Psoas muscle (tissue), 8 donors: ENCODE measurements at regions of chr11 and their contacts with region 1.

Region 1: DNA sequence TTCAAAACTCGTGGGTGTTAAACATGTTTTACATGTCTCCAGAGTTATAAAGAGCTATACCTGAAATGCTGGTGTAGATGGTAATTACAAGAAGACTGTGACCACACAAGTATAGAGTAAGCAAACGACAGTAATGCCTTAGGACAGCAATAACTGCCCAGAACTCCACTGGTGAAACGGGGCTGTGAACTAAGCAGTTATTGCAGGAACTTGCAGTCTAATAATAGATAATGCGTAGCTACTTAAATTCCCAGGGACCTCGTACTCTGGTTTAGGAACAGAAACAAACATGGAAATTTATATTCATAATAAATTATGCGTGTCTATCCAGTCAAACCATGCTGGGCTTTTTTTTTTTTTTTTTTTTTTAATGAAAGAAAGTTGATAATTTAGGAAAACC is 24.9 kb upstream of the TP53AIP1 start:
- DNase-seq: no peak
- ATAC-seq: peak in 3 of 4 donors; percentile 68 to 76 (median 75)
- H3K4me3 ChIP-seq: no peak overlapping the region
- H3K27ac ChIP-seq: no peak overlapping the region
- H3K4me1 ChIP-seq: peaks cover 5% of the 10 kb centered on the region
- H3K27me3 ChIP-seq: no peaks in the 10 kb centered on the region
- CTCF ChIP-seq: no peak

Region 2: GRCh38 chr11:128917144-128917724 is 50.3 kb before region 1 on chr11:
- intact Hi-C with region 1: loop called in 1 of 2 experiments (anchors 2 kb)
- DNase-seq: no peak
- ATAC-seq: no peak
- H3K4me3 ChIP-seq: no peak overlapping the region
- H3K27ac ChIP-seq: no peak overlapping the region
- H3K4me1 ChIP-seq: no peaks in the 10 kb centered on the region
- H3K27me3 ChIP-seq: peaks cover 0 to 6% (median 5%) of the 10 kb centered on the region in 3 donors
- CTCF ChIP-seq: no peak